A549 (cell line): ENCODE measurements at regions of chr16 and their contacts with region 1.

Region 1: GRCh38 chr16:9099131-9099625 is 7.7 kb downstream of the HAPSTR1 start:
- DNase-seq: no peak
- ATAC-seq: peak; percentile 33 to 41; a peak in 3 of 6 replicates
- H3K4me3 ChIP-seq: no peak overlapping the region
- H3K27ac ChIP-seq: no peak overlapping the region; a peak in 1 of 6 replicates
- H3K4me1 ChIP-seq: peaks cover 81% of the 10 kb centered on the region
- CTCF ChIP-seq: no peak
- EP300 ChIP-seq: no peak
- POLR2A ChIP-seq: no peak
- RAD21 ChIP-seq: no peak

Region 2: DNA sequence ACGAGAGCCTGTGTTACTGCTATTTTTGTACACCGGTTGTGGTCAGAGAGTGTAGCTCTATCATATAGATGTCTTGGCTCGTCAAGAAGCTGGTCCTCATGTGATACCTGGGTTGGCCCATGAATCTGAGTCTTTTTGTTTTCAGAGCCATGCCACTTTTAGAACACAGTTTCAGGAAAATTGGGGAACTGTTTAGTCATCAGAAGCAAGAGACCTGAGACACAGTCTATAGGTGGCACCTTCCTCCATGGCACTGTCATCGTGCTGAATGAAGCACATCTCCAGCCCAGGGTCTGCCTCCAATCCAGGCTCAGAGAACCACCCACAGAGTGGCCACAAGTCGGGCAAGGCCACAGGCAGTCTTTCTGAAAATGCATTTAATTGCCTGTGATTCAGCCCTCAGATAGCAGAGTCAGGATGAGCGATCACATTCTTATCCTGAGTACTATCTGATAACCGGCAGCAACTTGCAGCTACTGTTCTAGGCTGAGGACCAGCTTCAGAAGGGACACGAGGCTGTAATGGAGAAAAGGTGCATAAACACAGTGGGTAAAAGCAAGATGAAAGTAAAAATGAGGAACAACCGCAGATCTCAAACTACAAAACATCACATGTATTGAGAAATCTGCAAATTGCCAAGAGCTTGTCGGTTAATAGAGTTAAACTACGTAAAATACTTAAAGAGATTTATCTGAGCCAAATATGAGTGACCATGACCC is 21.9 kb before region 1 on chr16:
- CTCF ChIA-PET with region 1: interaction called, 10 read pairs
- POLR2A ChIA-PET with region 1: no interaction called
- DNase-seq: peak in 1 of 2 experiments; percentile 79
- ATAC-seq: peak; percentile 87 to 89
- H3K4me3 ChIP-seq: no peak overlapping the region
- H3K27ac ChIP-seq: peak overlapping the region; percentile 57 to 83
- H3K4me1 ChIP-seq: peaks cover 35% of the 10 kb centered on the region
- CTCF ChIP-seq: no peak
- EP300 ChIP-seq: no peak
- POLR2A ChIP-seq: no peak
- RAD21 ChIP-seq: peak in 1 of 2 experiments; percentile 4; a peak in 1 of 5 replicates